ENCODE measurements at regions of chr3 and their contacts with region 1.

Region 1: GRCh38 chr3:128736601-128737000 is 10.6 kb downstream of the RAB7A start:
- DNase-seq: no peak
- H3K4me3 ChIP-seq: no peak overlapping the region
- H3K27ac ChIP-seq: no peak overlapping the region
- H3K4me1 ChIP-seq: no peaks in the 10 kb centered on the region
- H3K27me3 ChIP-seq: no peaks in the 10 kb centered on the region
- CTCF ChIP-seq: no peak

Region 2: GRCh38 chr3:128487813-128488635 is 248.6 kb before region 1 on chr3:
- intact Hi-C with region 1: no loop called
- DNase-seq: peak; percentile 86
- H3K4me3 ChIP-seq: peak overlapping the region; percentile 58
- H3K27ac ChIP-seq: peak overlapping the region; percentile 50
- H3K4me1 ChIP-seq: peaks cover 47% of the 10 kb centered on the region
- H3K27me3 ChIP-seq: peaks cover 99% of the 10 kb centered on the region
- CTCF ChIP-seq: no peak

Region 3: DNA sequence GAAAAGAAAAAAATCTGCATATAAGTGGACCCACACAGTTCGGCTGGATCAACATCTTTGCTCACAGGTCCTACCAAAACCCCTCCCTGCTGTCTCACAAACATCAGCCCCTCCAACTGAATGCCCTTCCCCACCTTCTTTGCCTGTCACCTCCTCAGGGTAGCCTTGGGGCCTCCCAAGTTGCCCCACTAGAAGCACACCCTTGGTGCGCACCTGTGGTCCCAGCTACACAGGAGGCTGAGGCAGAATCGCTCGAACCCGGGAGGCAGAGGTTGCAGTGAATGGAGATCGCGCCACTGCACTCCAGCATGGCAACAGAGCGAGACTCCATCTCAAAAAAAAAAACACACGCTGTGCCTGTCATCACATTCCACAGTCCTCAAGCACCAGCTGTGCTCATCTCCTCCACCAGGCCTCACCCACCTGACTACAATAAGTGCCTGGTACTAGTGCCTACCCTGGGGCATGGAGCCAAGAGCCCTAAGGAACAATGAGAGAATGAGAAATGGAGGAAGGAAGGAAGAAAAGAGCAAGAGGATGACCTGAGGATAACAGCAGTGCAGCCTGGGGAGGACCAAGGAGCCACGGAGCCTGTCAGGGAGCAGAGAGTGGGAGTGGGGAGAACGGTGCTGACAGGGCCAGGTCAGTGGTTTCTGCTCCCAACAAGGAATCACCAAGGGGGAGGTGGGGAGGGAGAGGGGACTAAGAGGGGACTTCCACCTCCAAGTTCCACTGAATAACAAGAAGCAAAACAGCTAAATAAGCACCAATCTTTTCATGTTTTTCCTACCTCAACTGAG is 111.9 kb before region 1 on chr3:
- intact Hi-C with region 1: no loop called
- DNase-seq: no peak
- H3K4me3 ChIP-seq: no peak overlapping the region
- H3K27ac ChIP-seq: no peak overlapping the region
- H3K4me1 ChIP-seq: no peaks in the 10 kb centered on the region
- H3K27me3 ChIP-seq: no peaks in the 10 kb centered on the region
- CTCF ChIP-seq: no peak

Region 4: GRCh38 chr3:128787256-128788240 is 50.9 kb after region 1 on chr3:
- intact Hi-C with region 1: loop called (anchors 10 kb)
- DNase-seq: peak; percentile 34
- H3K4me3 ChIP-seq: no peak overlapping the region
- H3K27ac ChIP-seq: no peak overlapping the region
- H3K4me1 ChIP-seq: no peaks in the 10 kb centered on the region
- H3K27me3 ChIP-seq: no peaks in the 10 kb centered on the region
- CTCF ChIP-seq: no peak

Measured in colonic mucosa (tissue), 4 donors.